ENCODE measurements at regions of chr6 and their contacts with region 1.

Region 1: DNA sequence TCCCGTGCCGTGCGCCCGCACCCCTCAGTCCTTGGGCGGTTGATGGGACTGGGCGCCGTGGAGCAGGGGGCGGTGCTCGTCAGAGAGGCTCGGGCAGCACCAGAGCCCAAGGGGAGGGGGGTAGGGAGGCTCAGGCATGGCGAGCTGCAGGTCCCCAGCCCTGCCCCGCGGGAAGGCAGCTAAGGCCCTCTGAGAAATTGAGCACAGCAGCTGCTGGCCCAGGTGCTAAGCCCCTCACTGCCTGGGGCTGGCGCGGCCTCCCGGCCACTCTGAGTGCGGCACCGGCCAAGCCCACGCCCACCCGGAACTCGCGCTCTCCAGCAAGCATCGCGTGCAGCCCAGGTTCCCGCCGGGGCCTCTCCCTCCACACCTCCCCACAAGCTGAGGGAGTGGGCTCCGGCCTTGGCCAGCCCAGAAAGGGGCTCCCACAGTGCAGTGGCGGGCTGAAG is 16.4 kb downstream of the SOX4 start:
- DNase-seq: no peak
- ATAC-seq: no peak
- H3K4me3 ChIP-seq: no peak overlapping the region
- H3K27ac ChIP-seq: no peak overlapping the region
- H3K4me1 ChIP-seq: no peaks in the 10 kb centered on the region
- H3K27me3 ChIP-seq: no peaks in the 10 kb centered on the region
- CTCF ChIP-seq: no peak
- EP300 ChIP-seq: no peak
- POLR2A ChIP-seq: no peak
- RAD21 ChIP-seq: no peak

Region 2: DNA sequence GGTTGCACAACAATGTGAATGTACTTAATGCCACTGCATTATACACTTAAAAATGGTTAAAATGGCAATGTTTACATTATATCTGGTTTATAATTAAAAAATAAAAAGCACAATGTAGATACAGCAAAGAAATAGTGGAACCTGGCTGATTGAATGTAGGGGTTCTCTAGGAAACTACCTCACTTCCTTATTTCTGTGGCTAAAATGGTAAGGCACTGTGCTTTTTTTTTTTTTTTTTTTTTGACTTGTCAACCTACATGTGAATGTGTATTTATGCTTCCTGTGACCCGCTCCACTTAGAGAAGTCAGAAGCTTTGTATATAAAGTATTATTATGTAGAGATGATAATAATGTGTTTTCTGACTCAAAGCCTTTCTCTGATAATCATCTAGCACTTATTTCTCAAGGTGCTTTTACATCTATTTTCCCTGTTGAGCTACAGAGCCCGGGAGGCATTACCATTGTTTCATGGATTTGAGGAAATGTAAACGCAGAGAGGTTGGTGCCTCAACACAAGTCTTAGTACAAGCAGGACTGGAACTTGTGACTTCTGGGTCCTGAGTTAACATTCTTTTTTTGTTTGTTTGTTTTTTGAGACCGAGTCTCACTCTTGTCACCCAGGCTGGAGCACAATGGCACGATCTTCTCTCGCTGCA is 38.7 kb after region 1 on chr6:
- CTCF ChIA-PET with region 1: no interaction called
- POLR2A ChIA-PET with region 1: no interaction called
- RAD21 ChIA-PET with region 1: no interaction called
- SMC1A ChIA-PET with region 1: no interaction called
- in situ Hi-C with region 1: no loop called
- intact Hi-C with region 1: no loop called
- DNase-seq: no peak
- ATAC-seq: peak; percentile 90
- H3K4me3 ChIP-seq: no peak overlapping the region
- H3K27ac ChIP-seq: no peak overlapping the region
- H3K4me1 ChIP-seq: no peaks in the 10 kb centered on the region
- H3K27me3 ChIP-seq: no peaks in the 10 kb centered on the region
- CTCF ChIP-seq: no peak
- EP300 ChIP-seq: no peak
- POLR2A ChIP-seq: no peak
- RAD21 ChIP-seq: no peak

Region 3: DNA sequence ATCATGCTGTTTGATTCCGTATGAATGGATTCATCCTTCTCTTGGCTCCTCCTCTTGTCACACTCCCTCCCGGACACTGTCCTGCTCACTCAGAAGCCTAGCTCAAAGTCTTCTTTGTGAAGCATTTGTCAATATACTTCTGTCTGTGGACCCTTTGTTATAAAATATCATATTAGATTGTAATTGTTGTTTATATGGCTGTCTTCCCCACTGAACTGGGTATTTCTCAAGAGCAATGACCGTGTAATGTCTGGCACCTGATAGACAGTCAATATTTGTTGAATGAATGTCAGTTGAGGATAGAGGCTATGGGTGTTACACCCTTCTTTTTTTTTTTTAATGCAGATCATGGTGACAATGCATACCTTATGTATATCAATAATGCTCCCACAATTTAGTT is 318.9 kb after region 1 on chr6:
- CTCF ChIA-PET with region 1: no interaction called
- POLR2A ChIA-PET with region 1: no interaction called
- RAD21 ChIA-PET with region 1: no interaction called
- SMC1A ChIA-PET with region 1: no interaction called
- in situ Hi-C with region 1: no loop called
- intact Hi-C with region 1: loop called (anchors 5 kb)
- DNase-seq: no peak
- ATAC-seq: no peak
- H3K4me3 ChIP-seq: no peak overlapping the region
- H3K27ac ChIP-seq: no peak overlapping the region
- H3K4me1 ChIP-seq: peaks cover 9% of the 10 kb centered on the region
- H3K27me3 ChIP-seq: no peaks in the 10 kb centered on the region
- CTCF ChIP-seq: no peak
- EP300 ChIP-seq: no peak
- POLR2A ChIP-seq: no peak
- RAD21 ChIP-seq: no peak

Measured in GM12878 (cell line).